Activated CD8-positive, alpha-beta T cell treated with anti-CD3 and anti-CD28 coated beads, Interleukin-2, amount 10 ng/mL, durations not matched to agents 7 days and 5 days (primary cell): ENCODE measurements at regions of chr17 and their contacts with region 1.

Region 1: DNA sequence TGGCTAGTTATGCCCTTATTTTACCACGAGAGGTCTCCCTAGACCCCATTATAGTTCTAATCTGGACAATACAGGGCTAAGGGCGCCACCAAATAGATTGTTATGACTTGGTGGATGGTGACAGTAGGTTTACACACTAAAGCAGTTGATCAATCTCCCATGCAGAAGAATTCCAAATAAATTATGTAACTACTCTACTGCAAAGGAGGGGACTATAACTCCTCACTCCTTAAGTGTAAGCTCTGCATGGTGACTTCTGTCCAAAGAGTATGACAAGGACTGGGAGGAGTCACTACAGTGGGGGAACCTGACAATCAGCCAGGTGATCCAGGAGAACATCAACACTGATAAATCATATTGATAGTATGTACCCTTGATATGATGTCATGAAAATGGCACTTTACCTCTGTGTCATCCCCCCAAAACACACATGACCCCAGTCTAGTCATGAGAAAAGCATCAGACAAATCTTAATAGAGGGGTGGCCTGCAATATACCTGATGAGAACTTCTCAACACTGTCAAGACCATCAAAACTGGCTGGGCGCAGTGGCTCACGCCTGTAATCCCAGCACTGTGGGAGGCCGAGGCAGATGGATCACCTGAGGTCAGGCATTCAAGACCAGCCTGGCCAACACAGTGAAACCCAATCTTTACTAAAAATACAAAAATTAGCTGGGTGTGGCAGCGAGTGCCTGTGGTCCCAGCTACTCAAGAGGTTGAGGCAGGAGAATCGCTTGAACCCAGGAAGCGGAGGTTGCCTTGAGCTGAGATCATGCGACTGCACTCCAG is 20.1 kb upstream of the YPEL2 start:
- DNase-seq: peak; percentile 66
- ATAC-seq: peak; percentile 95
- H3K4me3 Mint-ChIP-seq: no peak overlapping the region
- H3K27ac Mint-ChIP-seq: no peak overlapping the region
- H3K4me1 Mint-ChIP-seq: peaks cover 6% of the 10 kb centered on the region
- H3K27me3 Mint-ChIP-seq: no peaks in the 10 kb centered on the region

Region 2: GRCh38 chr17:59440784-59441441 is 129.6 kb after region 1 on chr17:
- CTCF ChIA-PET with region 1: interaction called, 318 read pairs
- POLR2A ChIA-PET with region 1: interaction called, 3 read pairs
- DNase-seq: peak; percentile 96
- ATAC-seq: peak; percentile 99
- H3K4me3 Mint-ChIP-seq: peak overlapping the region; percentile 35
- H3K27ac Mint-ChIP-seq: peak overlapping the region; percentile 89
- H3K4me1 Mint-ChIP-seq: peaks cover 46% of the 10 kb centered on the region
- H3K27me3 Mint-ChIP-seq: no peaks in the 10 kb centered on the region

Region 3: DNA sequence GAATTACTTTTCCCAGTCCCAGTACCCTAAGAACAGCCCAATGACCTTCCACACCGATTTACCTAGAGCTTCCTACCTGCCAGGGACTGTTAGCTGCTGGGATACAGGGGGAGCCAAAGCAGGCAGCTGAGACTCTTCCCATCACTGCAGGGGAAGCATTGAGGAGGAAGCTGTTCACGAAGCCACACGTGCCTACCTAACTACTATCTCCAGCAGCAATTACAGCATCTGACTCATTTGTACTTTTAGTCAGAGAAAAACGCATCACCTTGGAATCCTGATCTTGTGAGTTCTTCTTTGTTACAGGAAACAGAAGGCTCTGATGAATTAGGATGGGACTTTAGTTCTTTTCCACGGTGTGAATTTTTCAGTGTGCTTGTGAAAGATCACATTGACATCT is 140.4 kb after region 1 on chr17:
- CTCF ChIA-PET with region 1: interaction called, 10 read pairs
- POLR2A ChIA-PET with region 1: no interaction called
- DNase-seq: no peak
- ATAC-seq: no peak
- H3K4me3 Mint-ChIP-seq: no peak overlapping the region
- H3K27ac Mint-ChIP-seq: no peak overlapping the region
- H3K4me1 Mint-ChIP-seq: no peaks in the 10 kb centered on the region
- H3K27me3 Mint-ChIP-seq: peaks cover 12% of the 10 kb centered on the region

Region 4: DNA sequence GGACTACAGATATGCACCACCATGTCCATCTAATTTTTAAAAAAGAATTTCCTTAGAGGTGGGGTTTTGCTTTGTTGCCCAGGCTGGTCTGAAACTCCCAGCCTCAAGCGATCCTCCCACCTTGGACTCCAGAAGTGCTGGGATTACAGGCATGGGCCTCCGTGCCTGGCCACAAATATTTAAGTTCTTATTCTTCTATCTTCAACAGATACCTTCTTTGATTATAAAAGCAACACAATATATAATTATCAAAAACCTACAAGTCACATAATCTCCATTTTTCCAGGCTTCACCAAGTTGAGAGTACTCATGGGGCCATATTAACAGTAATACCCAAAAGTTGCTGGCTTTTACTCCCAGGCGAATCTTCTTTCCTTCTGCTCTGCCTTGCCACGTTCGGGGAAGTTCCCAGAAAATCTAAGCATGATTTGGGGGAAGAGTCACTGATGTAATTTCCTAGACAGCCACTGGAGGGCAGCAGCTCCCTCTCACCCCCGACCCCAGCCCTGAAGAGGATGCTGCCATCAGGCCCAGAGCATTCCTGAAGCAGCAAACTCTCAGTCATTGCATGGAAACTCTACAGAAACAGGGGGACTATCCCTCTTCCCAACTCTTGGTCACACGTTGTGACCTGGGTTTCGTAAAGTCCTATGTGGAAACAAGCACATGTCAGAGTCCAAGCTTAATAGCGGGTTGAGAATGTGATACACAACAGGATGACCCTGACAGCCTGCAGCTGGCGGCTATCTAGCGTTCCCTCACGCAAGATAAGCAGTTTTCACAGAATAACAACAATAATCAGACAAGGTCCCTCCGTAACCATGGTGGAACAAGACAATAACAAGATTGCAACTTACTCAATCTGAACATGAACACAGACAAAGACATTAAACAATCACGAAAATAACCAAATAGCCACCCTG is 210.1 kb after region 1 on chr17:
- CTCF ChIA-PET with region 1: interaction called, 12 read pairs
- POLR2A ChIA-PET with region 1: no interaction called
- DNase-seq: peak; percentile 69
- ATAC-seq: peak; percentile 76
- H3K4me3 Mint-ChIP-seq: no peak overlapping the region
- H3K27ac Mint-ChIP-seq: no peak overlapping the region
- H3K4me1 Mint-ChIP-seq: peaks cover 7% of the 10 kb centered on the region
- H3K27me3 Mint-ChIP-seq: peaks cover 24% of the 10 kb centered on the region

Region 5: GRCh38 chr17:59565171-59565969 is 254.0 kb after region 1 on chr17 and contains the start of gene DHX40:
- CTCF ChIA-PET with region 1: interaction called, 16 read pairs
- POLR2A ChIA-PET with region 1: no interaction called
- DNase-seq: peak; percentile 97
- ATAC-seq: peak; percentile 89
- H3K4me3 Mint-ChIP-seq: peak within 1 kb of the TSS; percentile 100
- H3K27ac Mint-ChIP-seq: peak within 1 kb of the TSS; percentile 100
- H3K4me1 Mint-ChIP-seq: peaks cover 22% of the 10 kb centered on the region
- H3K27me3 Mint-ChIP-seq: no peaks in the 10 kb centered on the region
- total RNA-seq, gene DHX40: 17.7 to 20.8 TPM